ENCODE measurements at regions of chr12 and their contacts with region 1.

Region 1: DNA sequence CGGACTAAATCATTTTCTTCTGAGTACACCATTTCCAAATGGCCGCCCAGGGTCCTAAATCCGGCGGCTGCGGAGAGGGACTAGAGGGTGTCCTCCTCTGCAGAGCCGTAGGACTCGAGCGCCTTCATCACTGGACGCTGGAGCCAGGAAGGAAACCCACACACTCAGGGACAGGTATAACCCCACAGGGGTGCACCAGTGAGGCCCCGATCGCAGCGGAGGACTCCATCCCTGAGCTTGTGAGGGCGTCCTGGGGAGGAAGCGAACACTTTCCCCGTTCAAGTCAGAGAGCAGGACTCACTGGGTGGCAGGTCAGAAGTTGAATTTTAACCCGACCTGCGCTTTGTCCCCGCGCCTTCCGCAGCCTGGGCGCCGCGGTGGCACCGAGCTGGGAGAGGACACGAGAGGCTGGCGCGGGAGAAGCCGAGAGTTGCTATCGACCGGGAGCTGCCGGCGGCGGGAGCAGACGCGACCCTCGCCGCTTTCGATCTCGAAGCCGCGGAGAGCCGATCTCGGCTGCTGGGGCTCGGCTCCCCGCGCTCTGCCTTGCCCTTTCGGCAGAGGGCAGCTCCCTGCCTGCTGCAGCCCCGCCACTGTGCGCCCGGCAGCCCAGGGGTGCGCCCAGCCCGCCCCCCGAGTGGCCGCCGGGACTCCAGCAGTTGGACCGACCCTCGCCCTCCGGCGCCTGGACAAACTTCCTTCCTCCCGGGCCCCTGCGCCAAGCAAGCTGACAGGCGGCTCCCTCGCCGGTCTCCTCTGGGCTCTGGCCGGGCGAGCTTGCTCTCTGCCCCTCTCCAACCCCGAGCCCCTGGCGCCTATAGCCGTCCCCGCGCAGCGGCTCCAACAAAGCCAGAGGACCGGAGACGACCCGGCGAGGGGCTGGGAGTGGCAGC is 990 bp downstream of the LIN7A start:
- DNase-seq: peak; percentile 66
- ATAC-seq: peak; percentile 84

Region 2: GRCh38 chr12:80777587-80777986 is 159.2 kb before region 1 on chr12:
- intact Hi-C with region 1: no loop called
- DNase-seq: no peak
- ATAC-seq: peak; percentile 24

Region 3: GRCh38 chr12:80794551-80794950 is 142.2 kb before region 1 on chr12:
- intact Hi-C with region 1: no loop called
- DNase-seq: no peak
- ATAC-seq: no peak

Region 4: GRCh38 chr12:80837348-80837985 is 99.3 kb before region 1 on chr12:
- intact Hi-C with region 1: loop called (anchors 5 kb)
- DNase-seq: no peak
- ATAC-seq: peak; percentile 91

Region 5: GRCh38 chr12:81542065-81543010 is 605.6 kb after region 1 on chr12:
- intact Hi-C with region 1: no loop called
- DNase-seq: no peak
- ATAC-seq: no peak

Measured in left ventricle myocardium superior (tissue), 1 donor.